ENCODE measurements at regions of chr17 and their contacts with region 1.

Region 1: GRCh38 chr17:82030470-82031302 is 792 bp upstream of the RAC3 start:
- DNase-seq: peak; percentile 71 to 85 (median 78)
- H3K4me3 ChIP-seq: peak overlapping the region; percentile 43
- H3K4me3 Mint-ChIP-seq: peak overlapping the region; percentile 80 to 94 (median 85)
- H3K27ac ChIP-seq: peak overlapping the region; percentile 38
- H3K27ac Mint-ChIP-seq: peak overlapping the region in 3 of 8 donors; percentile 43 to 71 (median 51)
- H3K4me1 ChIP-seq: peaks cover 7% of the 10 kb centered on the region
- H3K4me1 Mint-ChIP-seq: peaks cover 8 to 21% (median 10%) of the 10 kb centered on the region in 3 donors
- H3K27me3 ChIP-seq: no peaks in the 10 kb centered on the region
- H3K27me3 Mint-ChIP-seq: peaks cover 0 to 4% of the 10 kb centered on the region in 2 donors

Region 2: GRCh38 chr17:81959362-81960129 is 71.1 kb before region 1 on chr17:
- CTCF ChIA-PET with region 1: interaction called, 10 read pairs
- POLR2A ChIA-PET with region 1: no interaction called
- DNase-seq: peak; percentile 80 to 86 (median 82)
- H3K4me3 ChIP-seq: no peak overlapping the region
- H3K4me3 Mint-ChIP-seq: peak overlapping the region in 1 of 7 donors; percentile 43
- H3K27ac ChIP-seq: peak overlapping the region; percentile 16
- H3K27ac Mint-ChIP-seq: no peak overlapping the region
- H3K4me1 ChIP-seq: no peaks in the 10 kb centered on the region
- H3K4me1 Mint-ChIP-seq: peaks cover 6 to 18% (median 7%) of the 10 kb centered on the region in 3 donors
- H3K27me3 ChIP-seq: peaks cover 13% of the 10 kb centered on the region
- H3K27me3 Mint-ChIP-seq: peaks cover 23 to 29% of the 10 kb centered on the region in 2 donors

Region 3: GRCh38 chr17:82105882-82106687 is 75.4 kb after region 1 on chr17:
- CTCF ChIA-PET with region 1: interaction called, 14 read pairs
- POLR2A ChIA-PET with region 1: no interaction called
- DNase-seq: peak; percentile 36 to 70 (median 54)
- H3K4me3 ChIP-seq: peak overlapping the region; percentile 88
- H3K4me3 Mint-ChIP-seq: peak overlapping the region; percentile 86 to 96 (median 90)
- H3K27ac ChIP-seq: peak overlapping the region; percentile 64
- H3K27ac Mint-ChIP-seq: peak overlapping the region; percentile 88 to 100 (median 96)
- H3K4me1 ChIP-seq: peaks cover 28% of the 10 kb centered on the region
- H3K4me1 Mint-ChIP-seq: peaks cover 19 to 38% (median 31%) of the 10 kb centered on the region in 3 donors
- H3K27me3 ChIP-seq: no peaks in the 10 kb centered on the region
- H3K27me3 Mint-ChIP-seq: no peaks in the 10 kb centered on the region

Region 4: GRCh38 chr17:82126556-82127314 is 96.0 kb after region 1 on chr17:
- CTCF ChIA-PET with region 1: interaction called, 10 read pairs
- POLR2A ChIA-PET with region 1: no interaction called
- DNase-seq: peak; percentile 74 to 96 (median 93)
- H3K4me3 ChIP-seq: peak overlapping the region; percentile 16
- H3K4me3 Mint-ChIP-seq: peak overlapping the region; percentile 3 to 87 (median 80)
- H3K27ac ChIP-seq: peak overlapping the region; percentile 63
- H3K27ac Mint-ChIP-seq: peak overlapping the region; percentile 87 to 99 (median 98)
- H3K4me1 ChIP-seq: peaks cover 79% of the 10 kb centered on the region
- H3K4me1 Mint-ChIP-seq: peaks cover 35 to 59% (median 49%) of the 10 kb centered on the region in 3 donors
- H3K27me3 ChIP-seq: no peaks in the 10 kb centered on the region
- H3K27me3 Mint-ChIP-seq: peaks cover 0 to 1% of the 10 kb centered on the region in 2 donors

Region 5: GRCh38 chr17:82153745-82154375 is 123.2 kb after region 1 on chr17:
- CTCF ChIA-PET with region 1: interaction called, 59 read pairs
- POLR2A ChIA-PET with region 1: interaction called, 3 read pairs
- DNase-seq: peak; percentile 70 to 86 (median 76)
- H3K4me3 ChIP-seq: no peak overlapping the region
- H3K4me3 Mint-ChIP-seq: no peak overlapping the region
- H3K27ac ChIP-seq: no peak overlapping the region
- H3K27ac Mint-ChIP-seq: peak overlapping the region in 4 of 8 donors; percentile 54 to 83 (median 72)
- H3K4me1 ChIP-seq: peaks cover 7% of the 10 kb centered on the region
- H3K4me1 Mint-ChIP-seq: peaks cover 0 to 5% (median 3%) of the 10 kb centered on the region in 3 donors
- H3K27me3 ChIP-seq: no peaks in the 10 kb centered on the region
- H3K27me3 Mint-ChIP-seq: no peaks in the 10 kb centered on the region

Region 6: DNA sequence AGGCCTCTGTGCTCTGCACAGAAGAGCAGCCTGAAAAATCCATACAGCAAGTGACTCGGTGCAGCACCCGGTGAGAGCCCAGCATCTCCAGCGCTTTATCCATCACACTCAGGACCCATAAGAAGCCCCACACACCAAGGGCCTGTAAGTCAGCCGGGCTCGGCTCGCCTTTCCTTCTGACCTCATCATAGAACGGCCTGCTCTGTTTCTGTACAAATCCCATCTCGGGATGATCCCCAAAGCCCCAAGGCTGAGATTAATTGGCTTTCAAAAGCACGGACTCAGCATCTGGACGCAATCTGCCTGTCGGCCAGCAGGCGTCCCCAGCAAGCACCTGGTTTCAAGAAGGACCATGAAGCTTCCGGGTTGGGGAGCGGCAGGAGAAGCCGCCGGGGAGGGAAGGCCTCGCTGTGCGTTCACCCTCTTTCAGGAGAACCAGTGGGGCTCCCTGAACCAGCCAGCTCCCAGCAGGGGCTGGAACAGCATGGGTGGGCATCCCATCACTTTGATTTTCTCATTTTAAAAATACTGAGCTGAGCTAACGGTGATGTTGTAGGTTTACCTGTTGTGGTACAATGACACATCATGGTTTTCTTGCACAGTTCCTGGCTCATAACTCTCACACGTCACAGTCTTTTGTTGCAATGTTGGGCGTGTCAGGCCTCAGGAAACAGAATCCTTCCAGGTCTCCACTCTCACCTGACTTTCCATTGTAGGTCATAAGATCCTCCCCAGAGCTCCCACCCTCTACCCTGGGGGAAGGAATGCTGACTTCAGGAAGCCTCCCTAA is 175.2 kb after region 1 on chr17:
- CTCF ChIA-PET with region 1: interaction called, 12 read pairs
- POLR2A ChIA-PET with region 1: no interaction called
- DNase-seq: peak; percentile 67 to 86 (median 78)
- H3K4me3 ChIP-seq: peak overlapping the region; percentile 30
- H3K4me3 Mint-ChIP-seq: peak overlapping the region; percentile 26 to 79 (median 65)
- H3K27ac ChIP-seq: peak overlapping the region; percentile 69
- H3K27ac Mint-ChIP-seq: peak overlapping the region; percentile 93 to 98 (median 96)
- H3K4me1 ChIP-seq: peaks cover 26% of the 10 kb centered on the region
- H3K4me1 Mint-ChIP-seq: peaks cover 36 to 56% (median 38%) of the 10 kb centered on the region in 3 donors
- H3K27me3 ChIP-seq: no peaks in the 10 kb centered on the region
- H3K27me3 Mint-ChIP-seq: no peaks in the 10 kb centered on the region

Measured in CD8-positive, alpha-beta memory T cell (primary cell).